Posterior vena cava (tissue), 2 donors: ENCODE measurements at regions of chr1 and their contacts with region 1.

Region 1: DNA sequence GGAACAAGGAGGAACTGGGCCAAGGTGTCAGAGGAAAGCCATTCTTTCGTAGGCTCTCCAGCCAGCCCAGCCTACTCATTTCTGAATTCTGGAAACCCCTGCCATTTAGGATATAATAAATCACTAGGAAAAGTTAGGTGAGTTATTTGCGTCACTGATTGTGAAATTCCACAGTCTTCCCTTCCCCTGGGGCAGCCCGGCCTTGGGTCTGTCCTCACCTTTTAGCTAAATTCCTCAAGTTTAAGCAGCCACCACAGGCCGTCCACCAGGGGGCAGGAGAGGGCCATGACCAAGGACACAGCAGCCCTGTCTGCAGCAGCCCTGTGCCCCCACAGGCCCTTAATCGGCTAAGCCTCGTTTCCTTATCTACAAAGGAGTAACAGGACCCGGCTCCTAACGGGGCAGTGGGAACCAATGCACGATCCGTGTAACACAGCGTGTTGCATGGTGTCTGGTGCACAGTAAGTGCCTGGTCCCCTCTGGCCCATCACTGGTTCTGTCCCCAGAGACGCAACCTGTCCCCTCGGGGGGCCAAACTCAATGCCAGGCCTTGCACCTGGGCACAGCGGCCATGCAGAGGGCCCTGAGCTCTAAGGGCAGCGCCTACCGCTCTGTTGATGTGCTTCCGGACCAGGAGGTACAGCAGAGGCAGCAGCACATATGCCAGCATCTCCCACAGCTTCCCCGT is 18.1 kb downstream of the GPR157 start:
- DNase-seq: peak; percentile 96

Region 2: DNA sequence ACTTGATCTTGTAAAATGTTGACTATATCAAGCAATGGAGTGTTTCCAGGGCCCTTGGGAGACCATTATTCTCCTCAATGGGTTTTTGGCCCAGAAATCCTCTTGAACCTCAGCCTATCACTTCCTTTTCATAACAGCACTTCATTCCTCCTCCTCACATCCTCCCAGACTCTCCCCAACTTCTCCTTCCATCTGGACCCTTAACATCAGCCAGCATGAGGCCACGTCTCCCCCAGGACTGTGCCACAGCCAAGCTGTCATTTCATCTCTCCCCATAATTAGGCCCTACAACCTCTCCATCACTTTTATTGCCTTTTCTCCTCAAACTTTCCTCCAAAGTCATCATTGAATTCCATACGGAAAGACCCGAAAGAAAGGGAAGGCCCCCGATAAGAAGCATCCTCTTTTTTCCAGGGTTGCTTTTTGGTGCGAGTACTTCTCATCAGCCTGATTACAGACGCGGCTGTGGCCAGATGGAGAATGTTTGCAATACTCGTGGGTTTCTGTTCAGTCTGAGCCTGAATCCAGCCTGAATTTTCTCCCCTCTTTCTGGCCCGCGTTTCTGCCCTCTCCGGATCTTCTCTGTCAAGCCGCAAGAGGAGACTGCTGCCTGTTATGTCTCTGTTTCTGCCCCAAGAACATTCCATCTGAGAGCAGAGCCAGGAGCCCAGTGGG is 375.8 kb after region 1 on chr1:
- intact Hi-C with region 1: loop called in 1 of 2 experiments (anchors 10 kb)
- DNase-seq: no peak